Heart right ventricle (tissue), 16 donors: ENCODE measurements at regions of chr15 and their contacts with region 1.

Region 1: DNA sequence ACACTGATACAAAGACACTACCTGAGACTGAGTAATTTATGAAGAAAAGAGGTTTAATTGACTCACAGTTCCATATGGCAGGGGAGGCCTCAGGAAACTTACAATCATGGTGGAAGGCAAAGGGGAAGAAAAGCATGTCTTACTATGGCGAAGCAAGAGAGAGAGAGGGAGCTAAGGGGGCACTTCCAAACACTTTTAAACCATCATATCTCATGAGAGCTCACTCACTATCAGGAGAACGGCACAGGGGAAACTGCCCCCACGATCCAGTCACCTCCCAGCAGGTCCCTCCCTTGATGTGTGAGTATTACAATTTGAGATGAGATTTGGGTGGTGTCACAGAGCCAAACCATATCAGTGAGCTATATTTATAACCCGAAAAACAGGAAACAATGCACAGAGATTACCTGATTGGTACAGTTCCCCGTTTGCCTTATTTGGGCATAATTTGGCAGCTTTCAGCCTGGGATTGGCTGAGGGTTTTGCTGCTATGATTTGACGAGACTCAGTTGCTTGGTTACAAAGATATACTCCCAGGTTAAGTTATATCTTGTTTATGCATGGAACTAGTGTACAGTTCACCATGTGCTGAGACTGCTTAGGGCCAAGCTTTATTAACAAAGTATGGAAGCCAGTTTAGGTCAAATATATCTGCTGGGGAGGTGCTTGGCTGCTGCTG is 184.2 kb downstream of the NR2F2 start:
- DNase-seq: no peak
- ATAC-seq: no peak
- H3K4me3 ChIP-seq: no peak overlapping the region
- H3K27ac ChIP-seq: no peak overlapping the region
- H3K4me1 ChIP-seq: peaks cover 0 to 8% (median 0%) of the 10 kb centered on the region in 9 donors
- H3K27me3 ChIP-seq: peaks cover 0 to 12% (median 5%) of the 10 kb centered on the region in 7 donors
- CTCF ChIP-seq: no peak

Region 2: DNA sequence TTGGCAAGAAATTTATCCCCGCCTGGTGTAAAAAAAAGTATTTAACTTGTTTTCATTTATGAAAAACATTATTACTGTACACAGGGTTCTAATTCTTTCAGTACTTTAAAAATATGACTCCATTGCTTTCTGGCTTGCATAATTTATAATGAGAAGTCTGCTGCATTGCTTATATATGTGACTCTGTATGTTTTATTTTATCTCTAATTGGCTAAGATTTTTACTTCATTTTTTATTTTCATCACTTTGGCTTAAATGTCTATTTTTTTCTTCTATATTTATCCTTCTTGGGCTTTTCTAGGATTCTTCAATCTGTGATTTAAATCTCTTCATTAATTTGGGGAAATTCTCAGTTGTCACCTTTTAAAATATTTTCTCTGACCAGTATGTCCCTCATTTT is 820.8 kb before region 1 on chr15:
- intact Hi-C with region 1: no loop called
- DNase-seq: no peak
- ATAC-seq: no peak
- H3K4me3 ChIP-seq: no peak overlapping the region
- H3K27ac ChIP-seq: no peak overlapping the region
- H3K4me1 ChIP-seq: no peaks in the 10 kb centered on the region
- H3K27me3 ChIP-seq: no peaks in the 10 kb centered on the region
- CTCF ChIP-seq: no peak

Region 3: GRCh38 chr15:96409215-96410138 is 105.3 kb before region 1 on chr15:
- intact Hi-C with region 1: no loop called
- DNase-seq: no peak
- ATAC-seq: peak in 2 of 8 donors; percentile 43 to 59
- H3K4me3 ChIP-seq: peak overlapping the region in 9 of 10 donors; percentile 23 to 50 (median 38)
- H3K27ac ChIP-seq: no peak overlapping the region
- H3K4me1 ChIP-seq: peaks cover 7 to 20% (median 14%) of the 10 kb centered on the region in 9 donors
- H3K27me3 ChIP-seq: peaks cover 21 to 98% (median 92%) of the 10 kb centered on the region in 7 donors
- CTCF ChIP-seq: no peak

Region 4: GRCh38 chr15:96535148-96535547 is 20.4 kb after region 1 on chr15:
- intact Hi-C with region 1: loop called in 1 of 10 experiments (anchors 2 kb)
- DNase-seq: no peak
- ATAC-seq: no peak
- H3K4me3 ChIP-seq: no peak overlapping the region
- H3K27ac ChIP-seq: no peak overlapping the region
- H3K4me1 ChIP-seq: no peaks in the 10 kb centered on the region
- H3K27me3 ChIP-seq: peaks cover 0 to 26% (median 5%) of the 10 kb centered on the region in 7 donors
- CTCF ChIP-seq: no peak

Region 5: GRCh38 chr15:96585484-96586386 is 71.0 kb after region 1 on chr15:
- intact Hi-C with region 1: no loop called
- DNase-seq: no peak
- ATAC-seq: no peak
- H3K4me3 ChIP-seq: no peak overlapping the region
- H3K27ac ChIP-seq: no peak overlapping the region
- H3K4me1 ChIP-seq: peaks cover 0 to 15% (median 0%) of the 10 kb centered on the region in 9 donors
- H3K27me3 ChIP-seq: peaks cover 0 to 21% (median 6%) of the 10 kb centered on the region in 7 donors
- CTCF ChIP-seq: peak in 6 of 9 donors; percentile 13 to 46 (median 39)